H1 (cell line): ENCODE measurements at regions of chr17 and their contacts with region 1.

Region 1: GRCh38 chr17:45719335-45720071 is 64.6 kb upstream of the CRHR1 start:
- DNase-seq: no peak
- H3K4me3 ChIP-seq: no peak overlapping the region
- H3K27ac ChIP-seq: no peak overlapping the region
- H3K4me1 ChIP-seq: peaks cover 0 to 5% (median 1%) of the 10 kb centered on the region in 4 experiments; a peak in 1 of 7 replicates
- H3K27me3 ChIP-seq: no peaks in the 10 kb centered on the region
- CTCF ChIP-seq: peak; percentile 29 to 69 (median 54)
- EP300 ChIP-seq: no peak
- POLR2A ChIP-seq: no peak
- RAD21 ChIP-seq: peak; percentile 26 to 46; a peak in 3 of 4 replicates

Region 2: GRCh38 chr17:45640141-45640850 is 79.2 kb before region 1 on chr17:
- CTCF ChIA-PET with region 1: interaction called, 29 read pairs
- POLR2A ChIA-PET with region 1: no interaction called
- DNase-seq: peak; percentile 57 to 89
- H3K4me3 ChIP-seq: no peak overlapping the region
- H3K27ac ChIP-seq: no peak overlapping the region
- H3K4me1 ChIP-seq: no peaks in the 10 kb centered on the region; a peak in 1 of 7 replicates
- H3K27me3 ChIP-seq: no peaks in the 10 kb centered on the region
- CTCF ChIP-seq: peak; percentile 93 to 99 (median 94)
- EP300 ChIP-seq: no peak
- POLR2A ChIP-seq: no peak
- RAD21 ChIP-seq: peak; percentile 97 to 98

Region 3: GRCh38 chr17:45677770-45678169 is 41.7 kb before region 1 on chr17:
- CTCF ChIA-PET with region 1: interaction called, 11 read pairs
- POLR2A ChIA-PET with region 1: no interaction called
- DNase-seq: no peak
- H3K4me3 ChIP-seq: no peak overlapping the region
- H3K27ac ChIP-seq: no peak overlapping the region
- H3K4me1 ChIP-seq: peaks cover 0 to 7% (median 2%) of the 10 kb centered on the region in 4 experiments; a peak in 2 of 7 replicates
- H3K27me3 ChIP-seq: no peaks in the 10 kb centered on the region
- CTCF ChIP-seq: no peak
- EP300 ChIP-seq: no peak
- POLR2A ChIP-seq: no peak
- RAD21 ChIP-seq: no peak

Region 4: GRCh38 chr17:45747911-45748310 is 28.4 kb after region 1 on chr17:
- CTCF ChIA-PET with region 1: interaction called, 15 read pairs
- POLR2A ChIA-PET with region 1: interaction called, 3 read pairs
- DNase-seq: no peak
- H3K4me3 ChIP-seq: no peak overlapping the region
- H3K27ac ChIP-seq: no peak overlapping the region
- H3K4me1 ChIP-seq: peaks cover 2 to 5% (median 3%) of the 10 kb centered on the region in 4 experiments; a peak in 5 of 7 replicates
- H3K27me3 ChIP-seq: peaks cover 17 to 90% (median 67%) of the 10 kb centered on the region in 4 experiments
- CTCF ChIP-seq: no peak
- EP300 ChIP-seq: no peak
- POLR2A ChIP-seq: no peak
- RAD21 ChIP-seq: no peak

Region 5: DNA sequence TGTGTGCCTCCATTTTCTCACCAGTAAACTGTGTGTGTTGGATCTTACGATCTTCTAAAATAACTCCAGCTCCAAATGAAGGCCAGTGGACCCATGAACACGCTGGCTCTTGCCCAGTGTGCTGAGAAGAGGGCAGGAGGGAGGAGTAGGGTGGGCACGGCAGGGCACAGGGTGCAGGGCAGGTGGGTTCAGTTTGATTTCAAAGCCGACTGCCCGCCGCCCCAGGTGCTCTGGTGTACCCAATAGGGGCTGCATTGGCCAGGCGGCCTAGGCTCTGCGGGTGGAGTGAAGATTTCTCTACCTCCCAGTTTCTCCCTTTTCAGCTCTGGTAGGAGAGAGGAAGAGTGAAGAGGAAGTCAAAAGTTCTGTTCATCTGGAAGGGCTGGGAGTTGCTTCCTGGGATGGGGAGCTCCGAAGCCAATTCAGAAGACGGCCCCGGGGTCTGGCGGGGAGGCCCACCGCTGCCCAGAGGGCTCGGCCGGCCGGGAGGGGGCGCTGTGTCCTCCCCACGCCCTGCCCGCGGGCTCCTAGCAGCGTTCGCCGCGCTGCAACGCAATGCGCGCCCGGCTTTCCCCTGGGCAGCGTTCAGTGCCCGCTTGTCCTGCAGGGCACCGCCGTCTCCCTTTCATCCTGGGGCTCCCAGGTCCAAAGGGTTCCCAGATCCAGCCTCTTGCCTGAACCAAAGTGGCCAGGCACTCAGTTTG is 63.5 kb after region 1 on chr17:
- CTCF ChIA-PET with region 1: interaction called, 18 read pairs
- POLR2A ChIA-PET with region 1: interaction called, 3 read pairs
- DNase-seq: peak in 1 of 2 experiments; percentile 93
- H3K4me3 ChIP-seq: peak overlapping the region; percentile 48 to 96 (median 76)
- H3K27ac ChIP-seq: no peak overlapping the region
- H3K4me1 ChIP-seq: peaks cover 0 to 19% (median 6%) of the 10 kb centered on the region in 4 experiments; a peak in 6 of 7 replicates
- H3K27me3 ChIP-seq: peaks cover 12 to 57% (median 49%) of the 10 kb centered on the region in 4 experiments
- CTCF ChIP-seq: peak; percentile 81 to 90 (median 87)
- EP300 ChIP-seq: no peak
- POLR2A ChIP-seq: no peak
- RAD21 ChIP-seq: peak; percentile 48 to 67; a peak in 3 of 4 replicates

Region 6: DNA sequence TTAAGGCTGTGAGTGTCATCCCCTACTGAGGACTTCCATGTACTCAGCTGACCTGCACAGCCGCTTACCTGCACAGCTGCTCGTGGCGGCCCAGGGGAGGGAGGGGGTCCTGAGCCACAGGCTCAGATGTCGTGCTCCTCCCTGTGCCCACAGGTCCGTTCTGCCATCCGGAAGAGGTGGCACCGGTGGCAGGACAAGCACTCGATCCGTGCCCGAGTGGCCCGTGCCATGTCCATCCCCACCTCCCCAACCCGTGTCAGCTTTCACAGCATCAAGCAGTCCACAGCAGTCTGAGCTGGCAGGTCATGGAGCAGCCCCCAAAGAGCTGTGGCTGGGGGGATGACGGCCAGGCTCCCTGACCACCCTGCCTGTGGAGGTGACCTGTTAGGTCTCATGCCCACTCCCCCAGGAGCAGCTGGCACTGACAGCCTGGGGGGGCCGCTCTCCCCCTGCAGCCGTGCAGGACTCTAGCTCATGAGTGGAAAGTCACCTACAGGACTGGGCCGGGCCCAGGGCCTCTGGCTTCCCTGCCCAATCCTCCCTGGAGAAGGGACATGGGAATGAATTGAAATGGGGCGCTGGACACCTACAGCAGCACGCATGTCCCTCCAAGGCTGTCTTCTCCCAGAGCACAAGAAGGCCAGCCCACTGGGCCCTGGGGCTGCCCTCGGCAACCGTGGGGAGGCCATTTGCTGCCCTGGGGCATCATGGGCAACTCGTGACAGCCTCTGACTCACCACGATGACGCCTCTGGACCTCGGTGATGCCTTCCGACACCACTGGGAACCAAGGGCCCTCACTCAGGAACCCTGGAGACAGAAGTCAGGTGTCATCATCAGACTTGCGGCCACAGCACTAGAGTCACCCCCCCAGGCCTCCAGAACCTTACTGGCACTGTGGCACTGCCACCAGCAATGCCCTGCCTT is 115.2 kb after region 1 on chr17:
- CTCF ChIA-PET with region 1: interaction called, 37 read pairs
- POLR2A ChIA-PET with region 1: no interaction called
- DNase-seq: no peak
- H3K4me3 ChIP-seq: no peak overlapping the region
- H3K27ac ChIP-seq: no peak overlapping the region
- H3K4me1 ChIP-seq: peaks cover 0 to 2% (median 2%) of the 10 kb centered on the region in 4 experiments; a peak in 2 of 7 replicates
- H3K27me3 ChIP-seq: no peaks in the 10 kb centered on the region
- CTCF ChIP-seq: no peak
- EP300 ChIP-seq: no peak
- POLR2A ChIP-seq: no peak
- RAD21 ChIP-seq: no peak

Region 7: GRCh38 chr17:45925311-45925710 is 205.8 kb after region 1 on chr17:
- CTCF ChIA-PET with region 1: no interaction called
- POLR2A ChIA-PET with region 1: no interaction called
- DNase-seq: no peak
- H3K4me3 ChIP-seq: no peak overlapping the region
- H3K27ac ChIP-seq: no peak overlapping the region
- H3K4me1 ChIP-seq: no peaks in the 10 kb centered on the region
- H3K27me3 ChIP-seq: no peaks in the 10 kb centered on the region
- CTCF ChIP-seq: no peak
- EP300 ChIP-seq: no peak
- POLR2A ChIP-seq: no peak
- RAD21 ChIP-seq: no peak

Region 8: GRCh38 chr17:45942284-45942683 is 222.8 kb after region 1 on chr17:
- CTCF ChIA-PET with region 1: no interaction called
- POLR2A ChIA-PET with region 1: no interaction called
- DNase-seq: no peak
- H3K4me3 ChIP-seq: no peak overlapping the region
- H3K27ac ChIP-seq: no peak overlapping the region
- H3K4me1 ChIP-seq: peaks cover 2 to 8% (median 4%) of the 10 kb centered on the region in 4 experiments; a peak in 5 of 7 replicates
- H3K27me3 ChIP-seq: no peaks in the 10 kb centered on the region; a peak in 1 of 7 replicates
- CTCF ChIP-seq: no peak
- EP300 ChIP-seq: no peak
- POLR2A ChIP-seq: no peak
- RAD21 ChIP-seq: no peak